Left colon (tissue), 2 donors: ENCODE measurements at regions of chr5 and their contacts with region 1.

Region 1: DNA sequence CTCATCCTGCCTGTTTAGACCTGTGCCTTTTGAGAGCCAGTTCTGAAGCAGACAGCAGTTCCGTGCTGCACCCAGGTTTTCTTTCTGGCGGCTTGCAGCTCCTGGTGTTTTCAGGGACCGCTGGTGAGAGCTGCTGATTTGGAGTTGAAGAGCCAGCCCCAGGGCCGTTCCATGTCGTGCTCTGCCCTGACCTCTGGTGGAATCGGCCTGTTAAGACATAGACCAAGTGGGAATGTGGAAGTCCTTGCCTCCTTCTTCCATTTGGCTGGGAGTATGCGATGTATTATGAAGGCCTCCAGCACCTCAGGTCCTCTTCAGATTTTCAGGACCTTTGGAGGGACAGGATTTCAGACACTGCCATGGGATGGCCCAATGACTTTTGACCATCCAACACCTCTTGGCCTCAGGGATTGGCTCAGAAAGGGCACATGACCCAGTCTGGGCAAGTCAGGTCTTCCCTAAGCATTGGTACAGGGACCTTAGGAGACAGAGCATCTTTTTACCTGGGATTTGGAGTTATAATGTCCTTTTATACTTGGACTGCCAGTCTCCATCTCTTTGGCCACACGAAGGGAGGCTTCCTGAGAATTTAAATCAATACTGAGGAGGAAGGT is 136.1 kb upstream of the CLINT1 start:
- DNase-seq: peak; percentile 58 to 72
- ATAC-seq: peak; percentile 99

Region 2: GRCh38 chr5:157816682-157817386 is 178.2 kb before region 1 on chr5:
- intact Hi-C with region 1: loop called in 1 of 2 experiments (anchors 2 kb)
- DNase-seq: no peak
- ATAC-seq: no peak

Region 3: GRCh38 chr5:157858527-157859226 is 136.3 kb before region 1 on chr5 and contains the start of gene CLINT1:
- intact Hi-C with region 1: loop called in 1 of 2 experiments (anchors 10 kb)
- DNase-seq: peak; percentile 91 to 96
- ATAC-seq: peak; percentile 91
- total RNA-seq, gene CLINT1: 108 to 139 TPM